HepG2 (cell line): ENCODE measurements at regions of chr4 and their contacts with region 1.

Region 1: DNA sequence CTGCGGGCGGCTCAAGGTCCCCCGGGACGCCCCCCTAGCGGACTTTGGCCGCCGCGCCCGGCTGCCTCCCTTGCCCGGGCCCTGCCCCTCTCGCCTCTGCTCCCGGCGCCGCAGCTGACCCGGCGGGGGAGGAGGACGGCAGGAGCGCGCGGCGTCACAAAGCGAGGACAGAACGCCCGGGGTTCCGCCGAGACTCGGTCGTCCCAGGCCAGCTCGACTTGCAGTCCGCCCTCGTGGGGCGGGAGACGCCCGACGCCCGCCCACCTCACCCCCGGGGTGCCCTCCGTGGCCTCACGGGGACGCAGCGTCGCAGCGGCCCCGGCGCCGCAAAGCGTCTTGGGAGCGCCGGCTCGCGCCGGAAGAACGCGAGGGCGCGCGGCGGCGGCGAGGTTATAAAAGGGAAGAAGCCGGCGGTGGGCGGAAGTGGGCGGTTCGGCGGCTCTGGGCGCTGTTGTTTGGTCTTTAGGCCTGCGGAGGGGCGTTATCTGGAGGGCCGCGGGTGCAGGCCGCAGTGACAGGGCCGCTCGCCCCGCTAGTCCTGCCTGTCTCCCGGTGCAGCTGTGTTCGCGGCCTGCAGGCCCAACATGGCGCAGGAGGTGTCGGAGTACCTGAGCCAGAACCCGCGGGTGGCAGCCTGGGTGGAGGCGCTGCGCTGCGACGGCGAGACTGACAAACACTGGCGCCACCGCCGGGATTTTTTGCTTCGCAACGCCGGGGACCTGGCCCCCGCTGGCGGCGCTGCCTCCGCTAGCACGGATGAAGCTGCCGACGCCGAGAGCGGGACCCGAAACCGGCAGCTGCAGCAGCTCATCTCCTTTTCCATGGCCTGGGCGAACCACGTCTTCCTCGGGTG is at the start of gene CDKN2AIP:
- DNase-seq: peak; percentile 87
- ATAC-seq: peak; percentile 91
- H3K4me3 ChIP-seq: peak within 1 kb of the TSS; percentile 86 to 99 (median 91)
- H3K27ac ChIP-seq: peak within 1 kb of the TSS; percentile 100
- H3K4me1 ChIP-seq: peaks cover 49% of the 10 kb centered on the region
- H3K27me3 ChIP-seq: no peaks in the 10 kb centered on the region; a peak in 1 of 5 replicates
- CTCF ChIP-seq: peak; percentile 34
- EP300 ChIP-seq: peak in 1 of 2 experiments; percentile 71; a peak in 2 of 4 replicates
- POLR2A ChIP-seq: peak; percentile 81 to 89
- RAD21 ChIP-seq: no peak; the same call in none of the 2 replicates
- total RNA-seq, gene CDKN2AIP: 18.7 and 21.4 TPM in 2 replicates

Region 2: GRCh38 chr4:182897601-182898478 is 546.6 kb before region 1 on chr4:
- CTCF ChIA-PET with region 1: no interaction called
- POLR2A ChIA-PET with region 1: interaction called, 11 read pairs
- in situ Hi-C with region 1: no loop called
- intact Hi-C with region 1: no loop called
- DNase-seq: peak; percentile 94
- ATAC-seq: peak; percentile 95
- H3K4me3 ChIP-seq: peak overlapping the region in 2 of 3 experiments; percentile 15 to 35; a peak in 3 of 6 replicates
- H3K27ac ChIP-seq: peak overlapping the region; percentile 93
- H3K4me1 ChIP-seq: peaks cover 67% of the 10 kb centered on the region
- H3K27me3 ChIP-seq: no peaks in the 10 kb centered on the region
- CTCF ChIP-seq: peak; percentile 38
- EP300 ChIP-seq: peak; percentile 38 to 76; a peak in 2 of 4 replicates
- POLR2A ChIP-seq: peak; percentile 64 to 79
- RAD21 ChIP-seq: peak; percentile 19; the same call in 1 of the 2 replicates

Region 3: DNA sequence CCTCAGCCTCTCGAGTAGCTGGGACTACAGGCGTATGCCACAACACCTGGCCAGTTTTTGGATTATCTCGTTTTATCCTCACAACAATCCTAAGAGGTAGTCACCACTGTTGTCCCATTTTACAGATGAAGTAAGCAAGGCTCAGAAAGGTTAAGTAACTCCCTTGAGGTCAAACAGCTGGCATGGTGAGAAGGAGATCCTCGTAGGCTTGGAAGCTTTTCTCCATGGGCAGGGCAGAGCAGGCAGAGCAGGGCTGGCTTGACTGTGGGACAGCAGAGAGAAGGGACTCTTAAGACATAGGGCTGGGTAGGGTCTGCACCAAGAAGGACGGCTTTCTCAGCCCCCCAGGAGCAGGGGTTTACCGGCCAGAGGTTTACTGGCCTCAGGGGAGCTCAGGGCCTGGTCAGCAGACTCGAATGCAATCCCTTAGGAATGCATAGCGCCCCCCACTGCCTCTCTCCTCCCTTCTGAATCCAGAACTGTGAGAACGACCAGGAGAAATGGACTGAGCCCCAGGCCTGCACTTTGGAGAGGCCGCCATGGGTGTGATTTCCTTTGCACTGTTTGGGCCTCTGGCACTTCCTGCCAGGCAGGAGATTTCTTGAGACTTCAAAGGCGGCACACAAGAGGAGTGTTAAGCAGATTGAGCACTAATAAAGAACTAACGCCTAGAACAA is 14.0 kb before region 1 on chr4:
- CTCF ChIA-PET with region 1: no interaction called
- POLR2A ChIA-PET with region 1: interaction called, 17 read pairs
- in situ Hi-C with region 1: no loop called
- intact Hi-C with region 1: no loop called
- DNase-seq: no peak
- ATAC-seq: peak; percentile 78
- H3K4me3 ChIP-seq: peak overlapping the region in 2 of 3 experiments; percentile 3 to 33; a peak in 2 of 6 replicates
- H3K27ac ChIP-seq: no peak overlapping the region
- H3K4me1 ChIP-seq: peaks cover 10% of the 10 kb centered on the region
- H3K27me3 ChIP-seq: no peaks in the 10 kb centered on the region
- CTCF ChIP-seq: peak; percentile 52
- EP300 ChIP-seq: no peak
- POLR2A ChIP-seq: no peak
- RAD21 ChIP-seq: no peak

Region 4: DNA sequence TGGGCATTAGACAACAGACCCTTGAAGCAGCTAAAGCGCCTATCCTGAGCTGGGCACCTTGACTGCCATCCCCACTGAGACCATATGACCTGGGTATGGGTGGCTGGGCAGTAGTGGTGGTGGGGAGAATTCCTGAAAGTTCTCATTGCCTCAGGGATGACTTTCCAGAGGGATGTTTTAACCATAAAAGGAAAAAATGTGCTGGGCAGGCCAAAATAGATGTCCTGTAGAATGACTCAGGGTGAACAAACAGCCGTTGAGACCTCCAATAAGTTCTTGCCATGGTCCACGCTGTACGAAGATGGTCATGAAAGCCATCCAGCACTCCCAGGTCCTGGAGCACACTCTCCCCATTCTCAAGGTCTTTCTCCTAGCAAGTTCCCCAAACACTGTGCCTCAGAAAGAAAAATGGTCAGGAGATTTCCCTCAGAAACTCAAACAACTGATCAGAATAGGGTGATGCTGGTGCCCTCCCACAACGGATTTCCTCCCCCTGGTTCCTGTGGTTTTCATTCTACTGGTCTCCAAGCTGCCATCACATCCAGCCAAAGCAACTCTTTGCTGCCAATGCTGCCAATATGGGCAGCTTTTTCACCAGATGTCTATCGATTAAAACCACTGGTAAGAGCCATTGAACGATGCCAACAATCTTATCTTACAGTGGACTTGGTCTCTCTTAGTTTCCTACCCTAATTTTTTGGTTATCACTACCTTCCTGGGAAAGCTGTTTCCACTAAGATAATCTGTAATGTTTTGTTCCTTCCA is 11.2 kb after region 1 on chr4:
- CTCF ChIA-PET with region 1: no interaction called
- POLR2A ChIA-PET with region 1: interaction called, 20 read pairs
- in situ Hi-C with region 1: no loop called
- intact Hi-C with region 1: no loop called
- DNase-seq: no peak
- ATAC-seq: no peak
- H3K4me3 ChIP-seq: no peak overlapping the region
- H3K27ac ChIP-seq: no peak overlapping the region
- H3K4me1 ChIP-seq: no peaks in the 10 kb centered on the region
- H3K27me3 ChIP-seq: no peaks in the 10 kb centered on the region
- CTCF ChIP-seq: no peak
- EP300 ChIP-seq: no peak
- POLR2A ChIP-seq: no peak
- RAD21 ChIP-seq: no peak

Region 5: DNA sequence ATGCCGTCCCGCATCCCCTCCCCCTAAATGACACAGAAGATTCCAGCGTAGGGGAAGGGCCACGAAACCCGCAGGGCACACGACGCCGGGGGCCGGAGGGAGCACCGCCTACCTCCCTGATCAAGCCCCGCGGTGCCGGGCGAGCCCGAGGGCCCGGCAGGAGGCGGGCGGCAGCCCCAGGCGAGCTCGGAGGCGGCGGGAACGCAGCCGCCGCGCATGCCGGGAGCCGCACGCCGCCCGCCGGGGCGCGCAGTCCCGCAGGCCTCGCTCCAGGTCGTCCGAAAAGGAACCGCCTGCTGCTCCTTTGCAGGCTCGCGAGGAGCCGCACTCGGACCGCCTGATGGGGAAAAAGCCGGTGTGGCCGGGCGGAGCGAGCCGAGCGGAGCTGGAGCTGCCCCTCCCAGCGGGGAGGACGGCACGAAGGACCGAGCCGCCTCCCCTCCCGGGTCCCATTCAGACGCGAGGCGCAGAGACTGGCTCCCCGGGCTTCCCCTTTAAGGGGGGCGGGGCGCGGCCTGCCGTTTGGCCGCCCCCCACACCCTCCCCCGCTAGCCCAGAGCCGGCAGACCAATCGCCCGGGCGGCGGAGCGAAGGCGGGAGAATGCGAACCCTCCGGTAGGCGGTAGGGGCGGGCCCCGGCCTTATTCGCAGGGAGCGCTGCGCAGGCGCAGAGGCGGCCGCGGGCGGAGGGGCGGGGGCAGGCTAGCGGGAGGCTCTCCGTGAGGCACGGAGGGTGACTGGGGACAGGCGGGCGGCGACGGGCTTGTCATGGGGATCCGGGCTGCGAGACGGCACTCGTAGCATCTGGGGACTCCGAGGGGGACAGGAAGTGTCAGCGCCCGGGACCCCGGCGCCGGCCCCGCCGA is 59.9 kb after region 1 on chr4:
- CTCF ChIA-PET with region 1: no interaction called
- POLR2A ChIA-PET with region 1: interaction called, 9 read pairs
- in situ Hi-C with region 1: no loop called
- intact Hi-C with region 1: loop called (anchors 2 kb)
- DNase-seq: peak; percentile 93
- ATAC-seq: peak; percentile 82
- H3K4me3 ChIP-seq: peak overlapping the region; percentile 84 to 99 (median 97)
- H3K27ac ChIP-seq: peak overlapping the region; percentile 91
- H3K4me1 ChIP-seq: peaks cover 49% of the 10 kb centered on the region
- H3K27me3 ChIP-seq: no peaks in the 10 kb centered on the region; a peak in 1 of 5 replicates
- CTCF ChIP-seq: peak; percentile 53
- EP300 ChIP-seq: peak; percentile 10 to 12; a peak in 1 of 4 replicates
- POLR2A ChIP-seq: peak; percentile 65 to 77
- RAD21 ChIP-seq: peak; percentile 86